Activated T-helper 2 cell treated with anti-CD3 and anti-CD28 coated beads, Interferon-gamma antibody, Interleukin-2, Interleukin-4, amounts not matched to agents 10 μg/mL and 5 μg/mL and 100 μg/mL, durations not matched to agents 14 hours and 24 hours and 36 hours (primary cell): ENCODE measurements at regions of chr1 and their contacts with region 1.

Region 1: GRCh38 chr1:53945433-53946251 is at the start of gene IFT25:
- DNase-seq: peak; percentile 96
- H3K4me3 Mint-ChIP-seq: peak within 1 kb of the TSS; percentile 92
- H3K27ac Mint-ChIP-seq: peak within 1 kb of the TSS; percentile 87
- H3K4me1 Mint-ChIP-seq: peaks cover 46% of the 10 kb centered on the region
- H3K27me3 Mint-ChIP-seq: no peaks in the 10 kb centered on the region
- total RNA-seq, gene IFT25: 52.9 and 54.3 TPM in 2 replicates

Region 2: DNA sequence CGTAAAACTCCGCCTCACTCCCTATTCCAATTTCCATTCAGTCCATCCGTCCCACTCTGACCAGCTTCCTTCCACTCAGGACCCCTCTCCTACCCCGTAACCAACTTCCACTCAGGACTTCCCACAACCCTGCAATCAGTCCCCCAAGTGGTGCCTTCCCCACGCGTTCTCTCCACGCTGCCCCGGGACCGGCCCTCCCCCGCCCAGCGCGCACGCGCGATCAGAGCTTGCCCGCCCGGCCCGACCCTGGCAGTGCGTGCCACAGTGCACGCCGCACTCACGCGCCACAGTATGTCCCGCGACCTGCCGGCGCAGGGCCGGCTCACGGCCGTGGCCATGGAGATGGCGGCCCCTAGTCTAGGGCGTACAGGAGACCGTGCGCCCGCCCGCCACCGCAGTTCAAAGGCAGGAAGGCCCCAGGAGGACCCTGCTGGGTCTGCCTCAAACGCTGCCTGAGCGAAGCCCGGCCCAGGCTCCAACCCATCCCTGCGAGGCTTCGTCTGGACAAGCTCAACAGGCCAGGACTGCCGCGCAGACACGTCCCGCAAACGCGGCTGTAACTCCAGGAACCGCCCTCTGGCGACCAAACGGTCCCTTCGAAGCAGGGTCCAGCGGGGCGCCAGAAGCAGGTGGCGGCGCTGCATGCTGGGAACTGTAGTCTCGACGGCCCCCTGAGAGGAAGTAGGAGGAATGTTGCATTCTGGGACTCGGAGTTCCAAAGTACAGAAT is 107.6 kb before region 1 on chr1 and contains the start of gene NDC1:
- intact Hi-C with region 1: loop called (anchors 2 kb)
- DNase-seq: peak; percentile 87
- H3K4me3 Mint-ChIP-seq: peak within 1 kb of the TSS; percentile 98
- H3K27ac Mint-ChIP-seq: peak within 1 kb of the TSS; percentile 94
- H3K4me1 Mint-ChIP-seq: peaks cover 22% of the 10 kb centered on the region
- H3K27me3 Mint-ChIP-seq: no peaks in the 10 kb centered on the region
- total RNA-seq, gene NDC1: 32.4 and 33.9 TPM in 2 replicates

Region 3: GRCh38 chr1:53860967-53861411 is 84.7 kb before region 1 on chr1:
- intact Hi-C with region 1: loop called (anchors 1 kb)
- DNase-seq: peak; percentile 20
- H3K4me3 Mint-ChIP-seq: no peak overlapping the region
- H3K27ac Mint-ChIP-seq: no peak overlapping the region
- H3K4me1 Mint-ChIP-seq: peaks cover 5% of the 10 kb centered on the region
- H3K27me3 Mint-ChIP-seq: no peaks in the 10 kb centered on the region

Region 4: GRCh38 chr1:53878492-53879105 is 67.0 kb before region 1 on chr1:
- intact Hi-C with region 1: loop called (anchors 1 kb)
- DNase-seq: no peak
- H3K4me3 Mint-ChIP-seq: no peak overlapping the region
- H3K27ac Mint-ChIP-seq: no peak overlapping the region
- H3K4me1 Mint-ChIP-seq: peaks cover 6% of the 10 kb centered on the region
- H3K27me3 Mint-ChIP-seq: no peaks in the 10 kb centered on the region

Region 5: DNA sequence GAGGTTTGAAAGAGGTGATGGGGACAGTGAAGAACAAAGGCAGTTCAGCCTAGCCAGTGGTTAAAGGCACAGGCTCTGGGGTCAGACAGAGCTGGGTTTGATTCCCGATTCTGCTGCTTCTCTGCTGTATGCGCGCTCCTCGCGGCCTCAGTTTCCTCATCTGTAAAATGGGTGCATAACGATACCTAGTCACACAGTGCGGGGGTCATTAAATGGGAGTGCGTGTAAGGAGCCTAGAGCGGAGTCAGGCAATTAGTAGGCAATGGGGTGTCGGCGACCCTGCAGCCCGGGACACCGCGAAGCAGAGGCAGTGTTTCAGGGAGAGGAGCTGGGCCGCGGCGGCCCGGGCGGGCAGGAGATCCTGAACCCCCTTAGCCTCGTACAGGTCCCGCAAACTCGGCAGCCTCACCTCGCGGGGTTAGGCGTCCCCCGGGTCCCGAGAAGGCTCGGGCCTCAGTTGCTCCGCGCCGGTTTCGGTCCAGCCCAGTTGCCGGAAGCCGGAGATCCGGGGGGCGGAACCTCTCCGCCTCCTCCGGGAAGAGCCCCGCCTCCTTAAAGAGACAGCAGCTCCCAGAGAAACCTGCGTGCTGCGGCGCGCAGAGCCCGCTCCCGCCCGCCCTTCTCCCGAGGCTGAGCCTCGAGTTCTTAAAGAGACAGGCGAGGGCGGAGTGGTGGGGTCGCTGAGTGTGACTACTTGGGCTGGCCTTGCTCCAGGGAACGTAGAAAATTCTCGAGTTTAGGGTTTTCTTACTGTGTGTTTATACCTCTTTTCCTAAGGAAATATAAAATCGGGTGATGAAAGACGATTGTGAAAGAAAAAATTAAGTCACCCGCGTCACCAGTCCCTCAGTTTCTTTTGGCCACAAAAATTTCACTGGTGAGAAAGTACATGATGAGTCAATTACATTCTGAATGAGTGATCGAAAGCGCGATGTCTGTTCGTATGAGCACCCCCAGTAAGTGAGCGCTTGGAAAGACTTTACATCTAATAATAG is 56.0 kb before region 1 on chr1 and contains the start of gene YIPF1:
- intact Hi-C with region 1: loop called (anchors 1 kb)
- DNase-seq: peak; percentile 85
- H3K4me3 Mint-ChIP-seq: peak within 1 kb of the TSS; percentile 99
- H3K27ac Mint-ChIP-seq: peak within 1 kb of the TSS; percentile 95
- H3K4me1 Mint-ChIP-seq: peaks cover 19% of the 10 kb centered on the region
- H3K27me3 Mint-ChIP-seq: no peaks in the 10 kb centered on the region
- total RNA-seq, gene YIPF1: 14.8 and 15.6 TPM in 2 replicates

Region 6: GRCh38 chr1:53919675-53920066 is 26.0 kb before region 1 on chr1:
- intact Hi-C with region 1: loop called (anchors 2 kb)
- DNase-seq: no peak
- H3K4me3 Mint-ChIP-seq: no peak overlapping the region
- H3K27ac Mint-ChIP-seq: peak overlapping the region; percentile 92
- H3K4me1 Mint-ChIP-seq: peaks cover 34% of the 10 kb centered on the region
- H3K27me3 Mint-ChIP-seq: no peaks in the 10 kb centered on the region